ENCODE measurements at regions of chr9 and their contacts with region 1.

Region 1: GRCh38 chr9:127586537-127586936 is 25.5 kb upstream of the STXBP1 start:
- DNase-seq: peak; percentile 81 to 86
- H3K4me3 ChIP-seq: no peak overlapping the region
- H3K27ac ChIP-seq: no peak overlapping the region
- H3K4me1 ChIP-seq: no peaks in the 10 kb centered on the region
- H3K27me3 ChIP-seq: no peaks in the 10 kb centered on the region
- CTCF ChIP-seq: peak; percentile 94 to 97 (median 97)
- POLR2A ChIP-seq: no peak

Region 2: DNA sequence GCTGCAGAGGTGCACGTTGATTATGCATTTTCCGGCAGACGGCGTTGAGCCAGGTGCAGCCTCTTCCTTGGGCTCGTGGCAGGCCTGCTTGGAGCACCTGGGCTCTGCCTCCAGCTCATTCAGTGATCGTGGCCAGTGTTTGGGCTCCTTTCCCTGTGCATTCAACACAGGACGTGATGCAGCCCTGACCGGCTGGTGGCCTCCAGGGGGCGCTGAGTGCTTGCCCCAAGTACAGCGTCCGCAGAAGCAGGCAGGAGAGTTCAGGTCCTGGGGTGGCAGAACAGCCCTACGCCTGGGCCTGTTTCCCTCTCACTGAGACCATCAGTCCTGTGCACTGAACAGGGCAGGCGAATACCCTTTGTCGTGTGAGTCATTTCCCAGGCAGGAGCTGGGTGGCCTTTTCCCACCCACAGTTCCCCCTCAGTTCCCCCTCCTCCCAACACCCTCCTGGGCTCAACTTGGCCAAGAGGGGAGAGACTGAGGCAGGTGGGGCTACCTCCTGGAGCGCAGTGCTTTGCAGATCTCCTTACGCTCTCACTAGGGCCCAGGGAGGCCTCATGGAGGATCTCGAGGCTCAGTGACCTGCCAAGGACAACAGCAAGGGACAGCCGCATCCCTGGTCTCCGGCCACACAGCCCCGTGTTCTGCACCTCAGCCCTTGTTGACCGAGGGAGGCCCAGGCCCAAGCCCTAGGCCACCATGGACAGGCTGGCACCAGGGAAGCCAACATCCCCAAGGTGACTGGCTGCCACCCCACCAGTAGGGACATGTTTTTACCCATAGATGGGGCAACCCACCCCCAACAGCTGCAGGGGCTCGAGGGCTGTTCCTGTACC is 82.4 kb before region 1 on chr9:
- intact Hi-C with region 1: loop called (anchors 5 kb)
- DNase-seq: peak; percentile 85 to 88
- H3K4me3 ChIP-seq: no peak overlapping the region
- H3K27ac ChIP-seq: peak overlapping the region; percentile 0 to 58
- H3K4me1 ChIP-seq: no peaks in the 10 kb centered on the region
- H3K27me3 ChIP-seq: no peaks in the 10 kb centered on the region
- CTCF ChIP-seq: peak; percentile 71 to 95 (median 87)
- POLR2A ChIP-seq: no peak

Region 3: GRCh38 chr9:127927457-127927987 is 341.0 kb after region 1 on chr9:
- intact Hi-C with region 1: loop called (anchors 5 kb)
- DNase-seq: peak; percentile 73 to 75
- H3K4me3 ChIP-seq: peak overlapping the region in 2 of 3 donors; percentile 61 to 69
- H3K27ac ChIP-seq: peak overlapping the region in 1 of 2 donors; percentile 44
- H3K4me1 ChIP-seq: peaks cover 5 to 9% of the 10 kb centered on the region in 2 donors
- H3K27me3 ChIP-seq: no peaks in the 10 kb centered on the region
- CTCF ChIP-seq: no peak
- POLR2A ChIP-seq: no peak